WTC11 (cell line): ENCODE measurements at regions of chr5 and their contacts with region 1.

Region 1: DNA sequence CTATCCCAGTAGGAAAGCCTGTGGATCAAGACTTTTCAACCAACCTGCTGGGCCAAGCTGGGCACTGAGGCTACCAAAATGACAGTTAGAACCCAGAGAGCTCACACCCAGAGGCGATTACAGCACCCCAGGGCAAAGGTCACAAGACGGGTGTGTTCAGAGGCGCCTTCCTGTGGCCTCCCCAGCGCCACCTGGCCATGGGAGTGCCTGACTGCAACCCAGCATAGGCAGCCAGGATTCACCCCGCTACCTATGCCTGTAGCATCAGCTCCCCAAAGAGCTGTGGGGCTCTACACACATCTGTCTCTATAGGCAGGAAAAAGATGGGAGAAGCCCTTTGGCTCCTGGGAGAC is 33.5 kb downstream of the PDGFRB start:
- DNase-seq: peak; percentile 65
- ATAC-seq: peak; percentile 92
- H3K4me3 Mint-ChIP-seq: no peak overlapping the region
- H3K27ac Mint-ChIP-seq: no peak overlapping the region
- H3K4me1 Mint-ChIP-seq: peaks cover 10% of the 10 kb centered on the region
- H3K27me3 Mint-ChIP-seq: no peaks in the 10 kb centered on the region
- CTCF ChIP-seq: no peak

Region 2: GRCh38 chr5:150075871-150076288 is 46.3 kb before region 1 on chr5:
- CTCF ChIA-PET with region 1: interaction called, 12 read pairs
- POLR2A ChIA-PET with region 1: no interaction called
- DNase-seq: no peak
- ATAC-seq: peak; percentile 64
- H3K4me3 Mint-ChIP-seq: no peak overlapping the region
- H3K27ac Mint-ChIP-seq: no peak overlapping the region
- H3K4me1 Mint-ChIP-seq: no peaks in the 10 kb centered on the region
- H3K27me3 Mint-ChIP-seq: no peaks in the 10 kb centered on the region
- CTCF ChIP-seq: no peak

Region 3: DNA sequence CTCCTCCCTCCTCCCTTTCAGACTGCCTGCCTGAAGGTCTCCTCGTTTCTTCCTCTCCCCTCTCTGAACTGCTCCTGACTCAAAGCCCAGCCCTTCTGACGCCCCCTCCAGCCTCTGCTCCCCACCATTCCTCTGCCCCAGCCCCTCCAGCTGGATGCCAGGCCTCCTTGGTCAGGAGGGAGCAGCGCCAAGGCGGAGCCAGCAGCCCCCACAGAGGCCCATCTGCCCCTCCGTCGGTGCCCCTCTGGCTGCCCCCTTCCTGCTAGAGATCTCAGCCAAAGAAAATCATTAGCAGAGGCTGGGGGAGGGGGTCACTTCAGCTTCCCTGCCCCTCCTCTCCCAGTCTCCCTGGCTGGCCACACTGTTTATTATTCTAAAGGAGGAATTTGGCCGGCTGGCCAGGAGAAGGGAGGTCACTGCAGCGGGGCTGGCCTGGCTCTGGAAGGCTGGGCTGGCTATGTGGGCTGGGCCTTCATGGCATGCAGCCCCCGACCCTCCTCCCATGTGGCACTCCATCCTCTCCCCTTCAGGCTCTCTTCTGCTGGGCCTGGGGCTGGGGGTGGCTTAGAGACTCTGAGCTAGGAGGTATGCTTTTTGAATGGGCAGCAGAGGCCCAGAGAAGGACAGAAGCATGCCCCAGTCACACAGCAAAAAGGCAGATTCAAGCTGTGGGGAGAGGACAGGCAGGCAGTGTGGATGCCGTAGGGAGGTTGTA is 16.6 kb after region 1 on chr5:
- CTCF ChIA-PET with region 1: interaction called, 16 read pairs
- POLR2A ChIA-PET with region 1: no interaction called
- DNase-seq: peak; percentile 55
- ATAC-seq: peak; percentile 33
- H3K4me3 Mint-ChIP-seq: peak overlapping the region; percentile 1; the same call in 1 of the 2 replicates
- H3K27ac Mint-ChIP-seq: peak overlapping the region; percentile 67
- H3K4me1 Mint-ChIP-seq: peaks cover 57% of the 10 kb centered on the region
- H3K27me3 Mint-ChIP-seq: peaks cover 8% of the 10 kb centered on the region
- CTCF ChIP-seq: no peak

Region 4: GRCh38 chr5:150161242-150162141 is 39.4 kb after region 1 on chr5:
- CTCF ChIA-PET with region 1: no interaction called
- POLR2A ChIA-PET with region 1: no interaction called
- DNase-seq: peak; percentile 97
- ATAC-seq: peak; percentile 85
- H3K4me3 Mint-ChIP-seq: peak overlapping the region; percentile 43
- H3K27ac Mint-ChIP-seq: no peak overlapping the region
- H3K4me1 Mint-ChIP-seq: peaks cover 26% of the 10 kb centered on the region
- H3K27me3 Mint-ChIP-seq: peaks cover 56% of the 10 kb centered on the region
- CTCF ChIP-seq: peak; percentile 95

Region 5: DNA sequence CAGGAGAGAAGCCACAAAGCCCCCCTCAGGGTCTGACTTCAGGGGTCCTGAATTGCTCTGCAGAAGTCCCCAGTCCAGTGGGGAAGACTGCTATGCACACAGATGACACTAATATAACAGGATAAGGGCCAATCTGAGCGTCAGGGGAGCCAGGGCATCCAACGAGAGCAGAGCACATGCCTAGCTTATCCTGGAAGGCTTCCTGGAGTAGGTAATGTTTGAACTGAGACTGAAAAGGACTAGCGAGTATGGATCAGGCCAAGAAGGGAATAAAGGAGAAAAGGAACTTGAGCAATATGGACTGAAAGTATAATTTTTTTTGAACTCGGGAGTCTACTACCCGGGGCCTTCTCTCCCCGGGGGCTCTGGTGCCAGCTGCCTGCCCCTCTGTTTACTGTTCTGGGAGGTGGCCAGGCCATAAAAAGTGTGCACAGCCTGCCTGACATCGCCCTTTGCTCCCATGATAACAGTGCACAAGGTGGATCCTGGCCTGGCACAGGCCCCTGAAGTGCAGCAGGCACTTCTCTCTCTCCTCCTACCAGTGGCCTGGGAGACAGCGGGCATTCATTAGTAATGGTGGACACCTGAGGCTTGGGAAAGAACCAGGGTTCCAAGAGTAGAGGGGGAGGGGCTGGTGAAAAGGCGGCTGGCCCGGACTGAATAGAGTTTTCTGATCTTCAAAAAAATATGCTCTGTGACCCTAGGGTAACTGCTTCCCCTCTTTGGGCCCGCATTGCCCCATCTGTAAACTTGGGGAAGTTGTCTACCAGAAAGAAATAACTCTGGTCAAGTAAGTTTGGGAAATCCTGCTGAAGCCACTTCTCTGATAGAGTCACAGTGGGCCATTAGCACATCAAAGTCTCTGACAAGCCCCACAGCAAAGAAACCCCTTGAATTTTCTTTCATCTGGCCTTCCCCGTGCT is 63.1 kb after region 1 on chr5:
- CTCF ChIA-PET with region 1: no interaction called
- POLR2A ChIA-PET with region 1: no interaction called
- DNase-seq: no peak
- ATAC-seq: no peak
- H3K4me3 Mint-ChIP-seq: no peak overlapping the region
- H3K27ac Mint-ChIP-seq: no peak overlapping the region
- H3K4me1 Mint-ChIP-seq: peaks cover 23% of the 10 kb centered on the region
- H3K27me3 Mint-ChIP-seq: peaks cover 60% of the 10 kb centered on the region
- CTCF ChIP-seq: no peak

Region 6: DNA sequence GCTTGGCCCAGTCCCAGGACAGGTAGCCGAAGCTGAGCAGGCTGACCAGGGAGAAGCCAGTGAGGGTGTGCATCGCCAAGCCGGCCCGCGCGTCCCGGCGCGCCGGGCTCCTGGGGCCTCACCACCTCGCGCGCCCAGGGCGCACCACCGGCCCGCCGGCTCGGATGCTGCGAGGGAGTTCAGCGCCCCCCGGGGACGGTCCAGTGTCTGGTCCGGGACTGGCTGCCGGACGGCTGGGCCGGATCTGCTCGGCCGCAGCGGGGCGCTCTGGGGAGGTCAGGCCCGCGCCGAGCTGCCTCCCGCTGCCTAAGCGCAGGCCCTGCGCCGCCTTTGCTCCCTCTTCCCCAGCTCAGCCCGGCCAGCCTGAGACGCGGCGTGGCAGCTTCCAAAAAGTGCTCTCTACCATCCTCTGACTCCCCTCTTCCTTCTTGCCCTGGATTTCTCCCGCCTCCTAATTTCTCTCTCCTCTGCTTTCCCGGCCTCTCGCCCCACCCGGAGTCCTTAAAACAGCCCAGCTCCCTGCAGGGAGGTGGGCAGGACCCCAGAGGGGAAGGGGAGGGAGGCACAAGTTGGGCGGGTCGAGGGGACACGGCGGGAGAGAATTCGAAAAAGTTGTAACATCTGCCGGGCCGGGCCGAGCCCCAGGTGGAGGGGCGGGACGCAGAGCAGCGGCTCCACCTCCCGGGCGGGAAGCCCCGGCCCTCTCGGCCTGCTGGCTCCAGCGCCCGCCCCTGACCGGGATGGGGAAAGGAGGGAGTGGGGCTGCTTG is 180.4 kb after region 1 on chr5 and contains the start of gene ARSI:
- CTCF ChIA-PET with region 1: no interaction called
- POLR2A ChIA-PET with region 1: no interaction called
- DNase-seq: peak; percentile 88
- ATAC-seq: peak; percentile 87
- H3K4me3 Mint-ChIP-seq: peak within 1 kb of the TSS; percentile 88
- H3K27ac Mint-ChIP-seq: peak within 1 kb of the TSS; percentile 93
- H3K4me1 Mint-ChIP-seq: peaks cover 62% of the 10 kb centered on the region
- H3K27me3 Mint-ChIP-seq: peaks cover 17% of the 10 kb centered on the region
- CTCF ChIP-seq: no peak
- total RNA-seq, gene ARSI: 5.9 to 6.9 TPM (median 6.6 TPM) in 3 replicates